ENCODE measurements at regions of chr16 and their contacts with region 1.

Region 1: DNA sequence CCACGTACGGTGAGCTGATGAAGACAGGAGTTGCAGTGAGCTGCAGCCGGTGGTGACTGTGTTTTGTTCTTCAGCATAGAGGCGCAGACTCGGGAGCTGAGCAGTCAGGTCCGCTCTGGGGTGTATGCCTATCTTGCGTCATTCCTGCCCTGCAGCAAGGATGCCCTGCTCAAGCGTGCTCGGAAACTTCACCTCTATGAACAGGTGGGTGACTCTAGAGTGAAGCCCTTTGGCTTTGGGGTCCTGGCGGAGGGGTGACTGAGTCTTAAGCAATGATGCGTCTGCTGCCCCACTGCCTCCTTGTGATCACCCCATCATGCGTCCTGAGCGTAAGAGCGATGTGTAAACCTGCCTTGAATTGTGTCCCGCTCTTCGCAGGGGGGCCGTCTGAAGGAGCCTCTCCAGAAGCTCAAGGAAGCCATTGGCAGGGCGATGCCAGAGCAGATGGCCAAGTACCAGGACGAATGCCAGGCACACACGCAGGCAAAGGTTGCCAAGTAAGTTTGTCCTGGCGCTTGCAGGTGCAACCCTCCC is 22.9 kb downstream of the UBN1 start:
- DNase-seq: no peak
- ATAC-seq: no peak
- H3K4me3 ChIP-seq: no peak overlapping the region
- H3K27ac ChIP-seq: no peak overlapping the region
- H3K4me1 ChIP-seq: no peaks in the 10 kb centered on the region
- H3K27me3 ChIP-seq: no peaks in the 10 kb centered on the region

Region 2: DNA sequence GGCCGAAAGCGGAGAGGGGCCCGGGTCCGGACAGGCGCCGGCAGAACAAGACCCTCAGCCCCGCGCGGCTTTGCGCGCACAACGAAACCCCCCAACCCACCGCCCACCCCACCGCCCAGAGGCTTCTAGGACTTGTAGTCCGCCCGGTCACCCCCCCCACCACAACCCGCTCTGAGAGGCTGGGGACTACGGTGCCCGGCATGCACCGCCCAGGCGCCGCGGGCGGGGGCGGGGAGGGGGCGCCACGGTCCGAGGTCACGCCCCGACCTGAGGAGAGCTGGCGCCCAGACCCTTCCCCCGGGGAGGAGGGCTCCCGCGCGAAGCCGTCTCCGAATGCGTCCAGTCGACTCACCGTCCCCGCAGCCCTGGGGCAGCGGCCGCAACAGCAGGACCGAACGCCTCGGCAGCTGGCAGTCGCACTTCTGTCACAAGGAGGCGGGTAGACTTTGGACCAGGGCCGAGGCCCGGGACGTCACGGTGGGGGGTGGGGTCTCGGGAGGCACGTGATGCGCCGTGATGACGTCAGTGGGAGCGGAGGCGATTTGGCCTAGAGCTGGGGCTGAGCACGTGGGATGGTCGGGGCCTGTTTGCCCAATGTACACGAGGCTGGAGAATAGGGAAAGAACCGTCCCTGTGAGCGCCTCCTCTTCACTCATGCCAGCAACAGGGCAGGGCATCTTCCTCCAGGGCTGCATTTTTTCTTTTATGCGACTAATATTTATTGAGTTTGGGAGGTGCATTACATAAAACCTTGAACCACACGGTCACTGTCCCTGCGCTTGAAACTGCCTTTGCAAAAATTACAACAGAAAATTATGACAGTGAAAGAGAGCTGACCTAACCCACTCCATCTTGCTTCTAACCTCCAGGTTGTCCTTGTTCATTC is 331.6 kb before region 1 on chr16 and contains the start of gene CDIP1:
- intact Hi-C with region 1: no loop called
- DNase-seq: peak; percentile 98 to 99 (median 99)
- ATAC-seq: peak; percentile 96
- H3K4me3 ChIP-seq: peak within 1 kb of the TSS; percentile 68
- H3K27ac ChIP-seq: peak within 1 kb of the TSS; percentile 71
- H3K4me1 ChIP-seq: peaks cover 2% of the 10 kb centered on the region
- H3K27me3 ChIP-seq: no peaks in the 10 kb centered on the region
- total RNA-seq, gene CDIP1: 34.2 to 46.8 (median 42.9) TPM

Region 3: DNA sequence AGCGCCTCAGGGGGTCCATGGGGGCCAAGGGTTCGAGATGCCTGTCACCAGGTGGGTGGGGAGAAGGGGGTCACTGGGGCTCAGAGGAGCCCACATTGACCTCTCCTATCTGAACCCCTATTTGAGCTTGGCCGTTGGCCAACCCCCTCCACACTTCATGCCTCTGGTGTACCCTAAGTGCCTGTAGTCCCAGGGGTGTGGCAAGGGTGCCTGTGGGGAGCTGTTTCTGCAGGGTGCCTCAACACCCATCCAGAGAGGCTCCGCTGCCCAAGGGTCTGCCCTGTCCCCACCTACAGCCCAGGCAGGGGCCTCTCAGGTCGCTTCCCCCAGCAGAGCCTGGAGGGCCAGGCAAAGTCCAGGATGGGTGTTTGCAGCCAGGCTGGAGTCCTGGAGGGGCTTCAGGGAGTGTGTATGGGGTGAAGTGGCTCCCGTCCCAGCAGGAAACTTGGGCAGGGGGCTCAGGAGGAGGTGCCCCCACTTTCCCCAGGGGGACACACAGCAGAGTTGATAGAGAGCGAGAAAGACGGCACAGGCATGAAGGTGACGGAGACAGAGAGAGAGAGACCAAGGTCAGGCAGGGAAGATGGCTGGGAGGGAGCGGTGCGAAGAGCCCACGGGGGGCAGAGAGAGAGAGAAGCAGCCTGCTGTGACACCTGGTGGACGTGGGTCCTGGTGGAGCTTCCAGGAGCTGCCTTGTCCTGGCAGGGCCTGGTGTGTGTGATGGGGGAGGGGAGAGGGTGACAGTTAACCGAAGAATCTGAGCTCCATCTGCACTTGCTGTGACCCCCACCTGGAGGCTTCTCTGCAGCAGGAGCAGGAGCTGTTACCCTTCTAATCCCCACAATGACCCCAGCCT is 82.3 kb before region 1 on chr16 and contains the start of gene SEPTIN12:
- intact Hi-C with region 1: no loop called
- DNase-seq: peak in 1 of 3 donors; percentile 43
- ATAC-seq: peak; percentile 20 to 22
- H3K4me3 ChIP-seq: no peak within 1 kb of the TSS
- H3K27ac ChIP-seq: no peak within 1 kb of the TSS
- H3K4me1 ChIP-seq: no peaks in the 10 kb centered on the region
- H3K27me3 ChIP-seq: no peaks in the 10 kb centered on the region
- total RNA-seq, gene SEPTIN12: 0.64 TPM in 1 of 4 donors, not detected in the others

Region 4: GRCh38 chr16:4814542-4815173 is 55.5 kb before region 1 on chr16:
- intact Hi-C with region 1: loop called in 1 of 4 experiments (anchors 10 kb)
- DNase-seq: peak in 2 of 3 donors; percentile 70 to 71
- ATAC-seq: peak; percentile 44 to 62
- H3K4me3 ChIP-seq: no peak overlapping the region
- H3K27ac ChIP-seq: peak overlapping the region; percentile 65
- H3K4me1 ChIP-seq: no peaks in the 10 kb centered on the region
- H3K27me3 ChIP-seq: no peaks in the 10 kb centered on the region

Region 5: GRCh38 chr16:5071681-5072333 is 201.6 kb after region 1 on chr16 and contains the start of gene ALG1:
- intact Hi-C with region 1: no loop called
- DNase-seq: peak; percentile 92 to 97 (median 97)
- ATAC-seq: peak; percentile 94 to 95
- H3K4me3 ChIP-seq: peak within 1 kb of the TSS; percentile 64
- H3K27ac ChIP-seq: peak within 1 kb of the TSS; percentile 81
- H3K4me1 ChIP-seq: no peaks in the 10 kb centered on the region
- H3K27me3 ChIP-seq: no peaks in the 10 kb centered on the region
- total RNA-seq, gene ALG1: 9.3 to 11.4 (median 10.1) TPM

Measured in right cardiac atrium (tissue), 5 donors.